H1 (cell line): ENCODE measurements at regions of chr2 and their contacts with region 1.

Region 1: GRCh38 chr2:74833418-74834233 is at the start of gene HK2:
- DNase-seq: peak; percentile 65 to 79
- H3K4me3 ChIP-seq: peak within 1 kb of the TSS; percentile 87 to 91 (median 88)
- H3K27ac ChIP-seq: peak within 1 kb of the TSS; percentile 96
- H3K4me1 ChIP-seq: peaks cover 7 to 21% (median 13%) of the 10 kb centered on the region in 4 experiments
- H3K27me3 ChIP-seq: no peaks in the 10 kb centered on the region
- CTCF ChIP-seq: no peak
- EP300 ChIP-seq: no peak
- POLR2A ChIP-seq: 0 out of 3 replicates have a peak, but pooled peaks of 1 of the 2 experiments have one; percentile 42
- RAD21 ChIP-seq: no peak
- total RNA-seq, gene HK2: 61.0 and 61.9 TPM in 2 replicates

Region 2: DNA sequence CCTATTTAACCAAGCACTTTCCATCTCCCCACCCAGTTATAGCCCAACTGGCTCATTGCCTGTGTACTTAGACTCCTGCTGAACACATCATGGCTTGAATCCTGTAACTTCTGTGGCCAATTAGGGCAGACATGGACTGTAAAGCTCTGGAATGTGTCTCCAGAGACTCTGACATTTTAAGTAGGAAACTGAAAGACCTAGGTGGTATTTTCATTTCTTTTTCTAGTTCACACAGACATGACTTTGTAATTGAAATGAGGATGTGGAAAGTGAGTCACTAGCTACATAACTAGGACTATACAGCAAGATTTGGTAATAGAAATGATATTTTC is 266.9 kb before region 1 on chr2:
- CTCF ChIA-PET with region 1: no interaction called
- POLR2A ChIA-PET with region 1: no interaction called
- DNase-seq: no peak
- H3K4me3 ChIP-seq: no peak overlapping the region
- H3K27ac ChIP-seq: no peak overlapping the region
- H3K4me1 ChIP-seq: no peaks in the 10 kb centered on the region
- H3K27me3 ChIP-seq: peaks cover 0 to 2% (median 0%) of the 10 kb centered on the region in 4 experiments; a peak in 1 of 7 replicates
- CTCF ChIP-seq: no peak
- EP300 ChIP-seq: no peak
- POLR2A ChIP-seq: no peak
- RAD21 ChIP-seq: no peak

Region 3: DNA sequence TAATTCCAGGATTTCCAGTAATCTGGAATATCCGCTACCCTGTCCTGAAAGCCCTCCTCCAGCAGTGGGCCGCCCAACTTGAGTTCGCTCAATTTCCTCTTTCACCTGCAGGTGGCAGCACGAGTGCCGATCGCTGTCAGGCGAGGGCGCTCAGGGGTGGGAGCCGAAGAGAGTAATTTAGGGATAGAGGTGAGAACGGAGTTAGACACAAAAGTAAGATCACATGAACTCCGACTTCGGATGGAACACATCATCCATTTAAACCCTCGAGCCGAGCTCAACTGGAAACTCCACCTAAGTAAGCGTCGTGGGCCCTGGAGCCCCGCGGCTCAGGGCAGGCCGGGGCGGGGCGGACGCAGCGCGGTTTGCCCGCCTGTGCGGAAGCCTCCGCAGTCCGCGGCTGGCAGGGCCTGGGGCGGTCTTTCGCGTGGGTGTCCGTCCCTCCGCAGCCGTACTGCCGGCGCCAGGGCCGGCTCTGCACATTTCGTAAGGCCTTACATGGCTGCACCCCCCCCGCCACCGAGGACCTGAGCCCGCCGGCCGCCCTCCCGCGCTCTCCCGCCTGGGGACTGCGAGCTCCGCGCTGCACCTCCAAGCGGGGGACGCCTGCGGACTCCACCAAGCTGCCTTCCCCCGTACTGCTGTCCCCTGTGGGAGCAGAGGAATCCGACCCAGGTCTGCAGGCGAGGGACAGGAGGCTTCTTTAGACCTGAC is 118.4 kb before region 1 on chr2:
- CTCF ChIA-PET with region 1: interaction called, 49 read pairs
- POLR2A ChIA-PET with region 1: interaction called, 6 read pairs
- DNase-seq: peak; percentile 53 to 97
- H3K4me3 ChIP-seq: peak overlapping the region; percentile 40 to 67 (median 56)
- H3K27ac ChIP-seq: no peak overlapping the region
- H3K4me1 ChIP-seq: peaks cover 0 to 4% (median 4%) of the 10 kb centered on the region in 4 experiments; a peak in 4 of 7 replicates
- H3K27me3 ChIP-seq: peaks cover 0 to 11% (median 11%) of the 10 kb centered on the region in 4 experiments; a peak in 6 of 7 replicates
- CTCF ChIP-seq: peak; percentile 88 to 98 (median 89)
- EP300 ChIP-seq: no peak
- POLR2A ChIP-seq: no peak
- RAD21 ChIP-seq: peak; percentile 82 to 85

Region 4: DNA sequence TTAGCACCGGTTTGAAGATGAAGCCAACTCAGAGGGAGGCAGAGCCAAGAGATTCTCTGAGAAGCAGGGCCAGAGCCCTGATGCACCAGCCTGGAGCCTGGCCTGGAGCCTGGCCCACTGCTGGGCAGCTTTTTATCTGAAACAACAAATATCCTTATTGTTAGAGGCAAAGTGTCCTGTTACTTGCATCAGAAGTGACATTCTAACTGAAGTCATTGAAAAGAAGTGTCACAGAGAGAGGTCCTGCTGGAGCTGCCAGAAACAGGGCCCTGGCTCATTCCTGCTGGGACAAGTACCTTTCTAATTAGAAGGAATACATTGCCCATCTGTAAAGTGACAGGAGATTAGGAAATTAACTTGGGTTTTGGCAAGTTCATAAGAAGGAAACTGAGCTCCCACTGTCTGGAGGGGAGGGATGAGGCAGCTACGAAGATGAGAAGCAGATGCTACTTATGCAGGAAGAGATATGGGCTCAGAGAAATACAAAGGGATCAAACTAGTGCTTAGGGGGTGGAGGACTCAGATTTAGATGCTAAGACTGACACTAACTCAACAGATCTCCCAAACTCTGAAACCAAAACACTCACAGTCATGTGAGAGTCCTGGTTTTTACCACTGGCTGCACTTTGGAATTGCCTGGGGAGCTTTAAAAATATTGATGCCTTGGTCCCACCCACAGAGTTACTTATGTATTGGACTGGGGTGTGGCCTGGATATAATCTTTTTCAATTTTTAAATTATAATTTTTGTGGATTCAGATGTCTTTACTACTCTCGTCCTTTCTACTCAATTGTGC is 10.7 kb before region 1 on chr2:
- CTCF ChIA-PET with region 1: interaction called, 33 read pairs
- POLR2A ChIA-PET with region 1: interaction called, 45 read pairs
- DNase-seq: no peak
- H3K4me3 ChIP-seq: no peak overlapping the region
- H3K27ac ChIP-seq: no peak overlapping the region
- H3K4me1 ChIP-seq: peaks cover 0 to 5% (median 0%) of the 10 kb centered on the region in 4 experiments; a peak in 2 of 7 replicates
- H3K27me3 ChIP-seq: no peaks in the 10 kb centered on the region; a peak in 1 of 7 replicates
- CTCF ChIP-seq: no peak
- EP300 ChIP-seq: no peak
- POLR2A ChIP-seq: no peak
- RAD21 ChIP-seq: no peak

Region 5: DNA sequence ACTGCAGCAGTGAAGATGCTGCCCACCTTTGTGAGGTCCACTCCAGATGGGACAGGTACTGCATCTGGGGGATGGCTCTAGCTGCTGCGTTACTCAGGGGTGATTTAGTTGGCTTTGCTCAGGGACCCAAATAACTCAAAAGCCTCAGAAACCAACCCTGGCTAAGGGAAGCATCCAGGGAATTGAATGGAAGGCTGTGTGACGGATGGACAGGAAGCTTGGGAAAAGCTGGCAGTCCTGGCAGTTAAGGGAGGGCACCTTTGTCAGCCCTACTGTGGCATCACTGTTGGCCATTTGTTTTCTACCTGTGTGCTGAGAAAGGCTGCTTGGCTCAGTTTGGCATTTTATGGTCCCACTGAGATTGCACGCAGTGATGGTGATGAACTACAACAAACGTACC is 20.8 kb after region 1 on chr2:
- CTCF ChIA-PET with region 1: interaction called, 117 read pairs
- POLR2A ChIA-PET with region 1: interaction called, 95 read pairs
- DNase-seq: no peak
- H3K4me3 ChIP-seq: no peak overlapping the region
- H3K27ac ChIP-seq: no peak overlapping the region
- H3K4me1 ChIP-seq: peaks cover 0 to 16% (median 12%) of the 10 kb centered on the region in 4 experiments; a peak in 5 of 7 replicates
- H3K27me3 ChIP-seq: no peaks in the 10 kb centered on the region
- CTCF ChIP-seq: no peak
- EP300 ChIP-seq: no peak
- POLR2A ChIP-seq: no peak
- RAD21 ChIP-seq: no peak